Activated CD4-positive, alpha-beta T cell treated with anti-CD3 and anti-CD28 coated beads, Interleukin-2, amount 10 ng/mL, durations not matched to agents 24 days and 14 days (primary cell): ENCODE measurements at regions of chr16 and their contacts with region 1.

Region 1: GRCh38 chr16:31458844-31459721 is at the start of gene ARMC5:
- DNase-seq: peak; percentile 99
- H3K4me3 Mint-ChIP-seq: peak within 1 kb of the TSS; percentile 95
- H3K27ac Mint-ChIP-seq: peak within 1 kb of the TSS; percentile 98
- H3K4me1 Mint-ChIP-seq: peaks cover 30% of the 10 kb centered on the region
- H3K27me3 Mint-ChIP-seq: no peaks in the 10 kb centered on the region
- total RNA-seq, gene ARMC5: 9.9 and 10.5 TPM in 2 replicates

Region 2: DNA sequence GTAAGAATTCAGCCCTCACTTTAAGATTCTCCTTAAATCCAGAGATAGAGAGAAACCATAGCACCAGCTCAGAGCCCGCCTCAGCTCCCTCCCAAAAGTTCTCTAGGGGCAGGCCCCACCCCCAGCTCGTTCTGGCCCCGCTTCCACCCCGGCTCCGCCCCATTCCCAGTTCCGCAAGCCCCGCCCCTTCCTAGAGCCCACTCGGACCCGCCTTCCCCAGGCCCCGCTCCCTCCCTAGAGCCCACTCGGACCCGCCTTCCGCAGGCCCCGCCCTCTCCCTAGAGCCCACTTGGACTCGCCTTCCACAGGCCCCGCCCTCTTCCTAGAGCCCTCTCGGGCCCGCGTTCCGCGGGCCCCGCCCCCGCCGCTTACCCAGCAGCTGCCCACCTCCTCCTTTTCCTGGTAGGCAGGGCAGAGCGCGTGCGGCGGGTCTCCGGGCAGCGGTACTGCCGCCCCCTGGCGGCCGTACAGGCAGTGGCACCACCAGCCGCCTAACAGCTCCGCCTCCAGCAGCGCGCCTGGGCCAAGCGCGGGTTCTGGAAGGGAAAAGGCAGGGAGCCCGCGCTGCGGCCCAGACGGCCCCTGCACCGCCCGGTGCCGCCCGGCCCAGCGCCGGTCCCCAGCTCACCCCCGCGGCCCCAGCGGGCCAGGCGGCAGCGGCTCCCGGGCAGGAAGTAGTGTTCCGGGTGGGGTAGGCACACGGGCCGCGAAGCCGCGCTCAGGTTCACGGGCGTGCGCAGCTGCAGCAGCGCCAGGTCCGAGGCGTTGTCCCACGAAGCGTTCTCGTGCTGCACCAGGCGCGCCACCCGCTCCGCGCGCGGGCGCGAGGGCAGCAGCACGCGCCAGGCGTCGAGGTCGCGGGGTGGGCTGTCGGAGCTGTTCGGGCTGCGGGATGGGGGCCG is 316.7 kb before region 1 on chr16:
- intact Hi-C with region 1: loop called (anchors 1 kb)
- DNase-seq: peak; percentile 99
- H3K4me3 Mint-ChIP-seq: peak overlapping the region; percentile 69
- H3K27ac Mint-ChIP-seq: peak overlapping the region; percentile 82
- H3K4me1 Mint-ChIP-seq: peaks cover 8% of the 10 kb centered on the region
- H3K27me3 Mint-ChIP-seq: no peaks in the 10 kb centered on the region

Region 3: GRCh38 chr16:31476303-31477219 is 17.5 kb after region 1 on chr16:
- intact Hi-C with region 1: loop called (anchors 1 kb)
- DNase-seq: peak; percentile 93
- H3K4me3 Mint-ChIP-seq: peak overlapping the region; percentile 90
- H3K27ac Mint-ChIP-seq: peak overlapping the region; percentile 66
- H3K4me1 Mint-ChIP-seq: peaks cover 17% of the 10 kb centered on the region
- H3K27me3 Mint-ChIP-seq: peaks cover 43% of the 10 kb centered on the region

Region 4: DNA sequence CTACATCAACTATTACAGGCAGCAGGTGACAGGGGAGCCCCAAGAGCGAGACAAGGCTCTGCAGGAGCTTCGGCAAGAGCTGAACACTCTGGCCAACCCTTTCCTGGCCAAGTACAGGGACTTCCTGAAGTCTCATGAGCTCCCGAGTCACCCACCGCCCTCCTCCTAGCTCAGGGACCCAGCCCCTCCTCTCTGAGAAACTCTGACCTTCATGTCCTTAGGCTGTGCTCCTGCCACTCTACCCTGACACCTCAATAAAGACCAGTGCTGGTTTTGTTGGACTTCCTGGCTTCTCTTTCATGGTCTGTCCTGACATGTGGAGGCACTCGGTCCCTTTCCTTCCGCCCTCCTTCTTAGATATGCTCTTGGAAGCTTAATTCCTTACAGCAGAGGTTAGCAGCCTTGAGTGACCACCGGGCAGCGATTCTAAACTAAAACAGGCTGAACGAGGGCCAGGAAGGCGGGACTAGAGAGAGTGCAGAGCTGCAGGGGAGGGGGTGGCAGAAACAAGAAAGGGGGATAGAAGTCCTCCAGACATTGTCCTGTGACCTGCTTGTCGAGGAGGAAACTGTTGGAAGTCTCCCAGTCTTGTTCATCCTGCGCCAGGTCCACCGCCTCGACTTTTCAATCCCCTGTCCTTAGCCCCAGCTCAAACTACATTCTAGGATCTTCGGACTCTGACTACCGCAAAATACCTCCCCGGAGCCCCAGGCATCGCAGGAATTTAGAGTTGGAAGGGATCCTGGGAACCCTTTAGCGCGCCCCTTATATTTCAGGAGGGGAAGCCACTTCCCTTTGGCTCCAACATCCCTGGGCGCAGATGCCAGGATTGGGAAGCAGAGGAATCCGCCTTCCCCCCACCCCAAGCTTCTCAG is 69.7 kb after region 1 on chr16:
- intact Hi-C with region 1: no loop called
- DNase-seq: no peak
- H3K4me3 Mint-ChIP-seq: peak overlapping the region; percentile 39
- H3K27ac Mint-ChIP-seq: no peak overlapping the region
- H3K4me1 Mint-ChIP-seq: peaks cover 2% of the 10 kb centered on the region
- H3K27me3 Mint-ChIP-seq: peaks cover 22% of the 10 kb centered on the region

Region 5: GRCh38 chr16:31700526-31701388 is 241.7 kb after region 1 on chr16:
- intact Hi-C with region 1: loop called (anchors 2 kb)
- DNase-seq: peak; percentile 92
- H3K4me3 Mint-ChIP-seq: peak overlapping the region; percentile 88
- H3K27ac Mint-ChIP-seq: peak overlapping the region; percentile 89
- H3K4me1 Mint-ChIP-seq: peaks cover 26% of the 10 kb centered on the region
- H3K27me3 Mint-ChIP-seq: peaks cover 15% of the 10 kb centered on the region